CD4-positive, alpha-beta memory T cell (primary cell): ENCODE measurements at regions of chr7 and their contacts with region 1.

Region 1: GRCh38 chr7:70693686-70694360 is 438.1 kb upstream of the GALNT17 start:
- DNase-seq: peak; percentile 56 to 72 (median 70)
- H3K4me3 ChIP-seq: no peak overlapping the region
- H3K4me3 Mint-ChIP-seq: peak overlapping the region; percentile 74 to 90 (median 81)
- H3K27ac ChIP-seq: no peak overlapping the region
- H3K27ac Mint-ChIP-seq: peak overlapping the region; percentile 35 to 92 (median 84)
- H3K4me1 ChIP-seq: peaks cover 5% of the 10 kb centered on the region
- H3K4me1 Mint-ChIP-seq: peaks cover 8 to 40% (median 24%) of the 10 kb centered on the region in 4 donors
- H3K27me3 ChIP-seq: no peaks in the 10 kb centered on the region
- H3K27me3 Mint-ChIP-seq: peaks cover 12% of the 10 kb centered on the region in 2 donors

Region 2: DNA sequence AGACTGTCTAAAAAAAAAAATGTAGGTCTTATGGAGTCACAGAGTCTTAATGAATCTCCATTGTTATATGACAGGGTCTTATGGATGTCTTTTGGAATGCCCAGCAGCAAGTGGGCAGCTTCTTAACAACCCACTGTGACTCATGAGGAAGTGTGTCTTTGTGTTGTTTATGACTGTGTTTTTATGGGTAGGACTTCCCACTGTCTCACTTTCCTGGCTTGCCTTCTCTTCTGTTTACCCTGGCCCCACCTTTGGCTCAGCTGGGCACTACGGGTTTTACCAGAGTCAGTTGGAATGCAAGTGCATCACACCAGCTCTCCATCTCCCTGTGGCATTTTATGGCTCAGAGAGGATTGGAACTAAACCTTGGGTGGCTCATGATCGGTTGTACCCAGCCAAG is 515.0 kb before region 1 on chr7:
- CTCF ChIA-PET with region 1: no interaction called
- POLR2A ChIA-PET with region 1: interaction called, 3 read pairs
- intact Hi-C with region 1: loop called (anchors 5 kb)
- DNase-seq: no peak
- H3K4me3 ChIP-seq: no peak overlapping the region
- H3K4me3 Mint-ChIP-seq: no peak overlapping the region
- H3K27ac ChIP-seq: no peak overlapping the region
- H3K27ac Mint-ChIP-seq: no peak overlapping the region
- H3K4me1 ChIP-seq: peaks cover 6% of the 10 kb centered on the region
- H3K4me1 Mint-ChIP-seq: peaks cover 2 to 7% (median 6%) of the 10 kb centered on the region in 4 donors
- H3K27me3 ChIP-seq: no peaks in the 10 kb centered on the region
- H3K27me3 Mint-ChIP-seq: peaks cover 0 to 3% of the 10 kb centered on the region in 2 donors

Region 3: GRCh38 chr7:70316786-70317755 is 376.8 kb before region 1 on chr7:
- CTCF ChIA-PET with region 1: interaction called, 3 read pairs
- POLR2A ChIA-PET with region 1: interaction called, 5 read pairs
- intact Hi-C with region 1: loop called (anchors 5 kb)
- DNase-seq: peak; percentile 31 to 60 (median 59)
- H3K4me3 ChIP-seq: no peak overlapping the region
- H3K4me3 Mint-ChIP-seq: peak overlapping the region in 7 of 8 donors; percentile 38 to 75 (median 58)
- H3K27ac ChIP-seq: no peak overlapping the region
- H3K27ac Mint-ChIP-seq: peak overlapping the region; percentile 58 to 89 (median 76)
- H3K4me1 ChIP-seq: peaks cover 23% of the 10 kb centered on the region
- H3K4me1 Mint-ChIP-seq: peaks cover 13 to 49% (median 30%) of the 10 kb centered on the region in 4 donors
- H3K27me3 ChIP-seq: no peaks in the 10 kb centered on the region
- H3K27me3 Mint-ChIP-seq: no peaks in the 10 kb centered on the region

Region 4: DNA sequence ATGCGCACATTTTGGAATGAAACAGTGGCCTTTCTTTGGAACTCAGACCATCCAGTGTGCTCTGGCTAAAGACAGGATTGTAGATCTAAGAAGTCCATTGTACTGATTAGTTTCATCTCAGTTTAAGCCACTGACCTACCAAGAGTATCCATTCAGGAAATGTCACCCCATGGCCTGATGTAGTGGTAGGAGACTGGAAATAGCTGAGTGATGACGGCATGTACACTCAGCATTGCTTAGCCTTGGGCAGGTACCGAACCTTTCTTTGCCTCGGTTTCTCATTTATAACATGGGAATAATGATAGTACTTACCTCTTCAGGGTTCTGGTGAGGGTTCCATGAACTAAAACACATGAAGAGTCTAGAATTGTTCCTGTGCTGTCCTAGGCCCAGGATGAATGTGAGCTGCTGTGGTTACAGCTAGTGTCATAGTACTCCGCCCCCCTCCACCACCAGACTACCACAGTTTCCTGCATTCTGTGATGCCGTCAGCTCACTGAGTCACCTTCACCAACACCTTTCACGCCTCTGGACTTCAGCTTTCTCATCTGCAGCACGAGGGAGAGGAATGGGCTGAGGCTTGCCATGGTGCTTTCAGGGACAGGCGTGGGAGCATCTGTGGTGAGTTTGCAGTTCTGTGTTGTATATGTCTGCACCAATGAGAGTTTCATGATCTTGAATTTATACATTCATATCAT is 45.9 kb before region 1 on chr7:
- CTCF ChIA-PET with region 1: interaction called, 14 read pairs
- POLR2A ChIA-PET with region 1: interaction called, 51 read pairs
- intact Hi-C with region 1: loop called (anchors 1 kb)
- DNase-seq: peak; percentile 80 to 91 (median 87)
- H3K4me3 ChIP-seq: no peak overlapping the region
- H3K4me3 Mint-ChIP-seq: peak overlapping the region in 7 of 8 donors; percentile 29 to 79 (median 49)
- H3K27ac ChIP-seq: peak overlapping the region; percentile 28
- H3K27ac Mint-ChIP-seq: peak overlapping the region; percentile 78 to 96 (median 92)
- H3K4me1 ChIP-seq: peaks cover 20% of the 10 kb centered on the region
- H3K4me1 Mint-ChIP-seq: peaks cover 12 to 31% (median 15%) of the 10 kb centered on the region in 4 donors
- H3K27me3 ChIP-seq: no peaks in the 10 kb centered on the region
- H3K27me3 Mint-ChIP-seq: no peaks in the 10 kb centered on the region

Region 5: DNA sequence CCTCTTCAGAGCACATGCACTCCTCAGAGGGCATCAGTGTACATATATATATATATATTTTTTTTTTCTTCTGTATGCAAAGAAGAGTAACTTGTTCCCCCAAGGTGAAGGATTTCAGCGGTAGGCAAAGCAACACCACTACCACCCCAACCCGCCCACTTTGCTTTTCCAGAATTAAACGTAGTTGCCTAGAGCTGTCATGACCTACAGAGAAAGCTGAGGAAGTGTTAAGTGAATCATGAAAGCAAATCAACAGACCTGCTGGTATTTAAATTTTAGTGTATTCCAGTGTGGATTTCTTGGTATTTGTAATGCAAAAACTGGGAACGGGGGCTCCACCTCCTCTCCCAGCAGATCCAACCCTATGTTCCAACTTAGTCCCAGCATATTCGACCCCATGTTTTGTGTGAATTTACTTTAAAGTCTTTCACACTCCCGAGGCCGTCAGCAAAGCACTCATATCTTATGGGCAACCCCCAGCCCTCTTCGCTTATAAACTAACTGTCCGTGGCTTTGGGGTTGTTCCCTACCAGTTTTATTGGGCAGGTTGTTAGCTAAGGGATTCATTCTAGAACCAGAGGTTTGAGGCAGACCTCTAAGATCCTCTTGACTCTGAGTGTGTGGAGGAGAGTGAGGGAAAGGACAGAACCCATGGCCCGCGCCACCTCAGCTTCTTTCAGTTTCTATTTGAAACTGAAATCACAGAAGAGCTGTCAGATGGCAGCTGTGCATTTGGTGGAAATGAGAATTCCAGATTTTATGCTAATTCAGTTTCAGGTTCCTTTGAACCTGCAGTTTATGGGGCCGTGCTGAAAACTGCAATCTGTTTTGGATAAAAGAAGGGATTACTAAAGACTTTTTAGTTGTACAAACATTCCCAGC is 12.1 kb before region 1 on chr7:
- CTCF ChIA-PET with region 1: interaction called, 13 read pairs
- POLR2A ChIA-PET with region 1: interaction called, 14 read pairs
- intact Hi-C with region 1: no loop called
- DNase-seq: peak in 2 of 5 donors; percentile 30 to 46
- H3K4me3 ChIP-seq: peak overlapping the region in 1 of 2 donors; percentile 2
- H3K4me3 Mint-ChIP-seq: peak overlapping the region; percentile 83 to 90 (median 86)
- H3K27ac ChIP-seq: peak overlapping the region; percentile 50
- H3K27ac Mint-ChIP-seq: peak overlapping the region; percentile 75 to 98 (median 95)
- H3K4me1 ChIP-seq: peaks cover 16% of the 10 kb centered on the region
- H3K4me1 Mint-ChIP-seq: peaks cover 19 to 46% (median 33%) of the 10 kb centered on the region in 4 donors
- H3K27me3 ChIP-seq: no peaks in the 10 kb centered on the region
- H3K27me3 Mint-ChIP-seq: peaks cover 0 to 1% of the 10 kb centered on the region in 2 donors

Region 6: DNA sequence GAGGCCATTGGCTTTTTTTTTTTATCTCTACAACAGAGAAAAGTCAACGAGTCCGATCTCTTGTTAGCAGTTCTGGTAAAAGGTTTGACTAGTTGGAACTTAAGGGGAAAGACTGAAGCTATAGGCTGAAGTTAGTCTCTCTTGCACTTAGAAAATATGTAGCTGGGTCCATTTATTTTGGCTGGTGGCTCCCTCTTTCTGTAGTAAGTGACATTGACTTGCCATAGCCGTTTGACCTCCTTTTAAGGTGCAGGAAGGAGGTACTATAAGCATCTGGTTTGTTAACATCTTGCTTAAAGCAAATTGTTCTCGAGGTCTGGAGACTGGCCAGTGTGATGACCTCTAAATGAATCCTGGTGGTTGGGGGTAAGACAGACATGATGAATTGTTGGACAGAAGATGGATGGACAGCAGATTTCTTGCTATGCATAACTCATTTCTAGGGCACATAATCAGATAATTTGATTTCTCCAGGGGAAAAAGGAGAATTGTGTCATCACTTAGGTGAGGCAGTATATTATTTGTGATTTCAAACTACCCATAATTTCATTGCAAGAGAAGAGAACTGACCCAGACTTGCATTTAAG is 81.8 kb after region 1 on chr7:
- CTCF ChIA-PET with region 1: interaction called, 21 read pairs
- POLR2A ChIA-PET with region 1: interaction called, 22 read pairs
- intact Hi-C with region 1: no loop called
- DNase-seq: peak in 2 of 5 donors; percentile 34 to 51
- H3K4me3 ChIP-seq: no peak overlapping the region
- H3K4me3 Mint-ChIP-seq: peak overlapping the region in 5 of 8 donors; percentile 5 to 71 (median 64)
- H3K27ac ChIP-seq: peak overlapping the region; percentile 38
- H3K27ac Mint-ChIP-seq: peak overlapping the region; percentile 43 to 98 (median 92)
- H3K4me1 ChIP-seq: peaks cover 46% of the 10 kb centered on the region
- H3K4me1 Mint-ChIP-seq: peaks cover 34 to 71% (median 44%) of the 10 kb centered on the region in 4 donors
- H3K27me3 ChIP-seq: no peaks in the 10 kb centered on the region
- H3K27me3 Mint-ChIP-seq: no peaks in the 10 kb centered on the region

Region 7: DNA sequence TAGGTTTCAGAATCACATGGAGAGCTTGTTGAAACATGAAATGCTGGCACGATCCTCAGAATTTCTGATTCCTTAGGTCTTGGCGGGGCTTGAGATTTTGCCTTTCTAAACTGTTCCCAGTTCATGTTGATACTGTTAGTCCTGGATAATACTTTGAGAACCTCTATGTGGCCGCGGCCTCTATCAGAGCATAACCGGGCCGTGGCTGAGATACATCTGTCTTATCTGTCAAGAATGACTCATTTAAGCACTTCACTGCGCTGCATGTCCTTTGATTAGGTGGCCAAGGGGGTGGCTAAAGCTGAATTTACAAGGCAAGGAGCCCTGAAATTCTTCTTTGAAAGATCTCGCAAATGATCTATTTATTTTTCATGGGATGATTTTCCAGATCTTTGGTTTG is 505.1 kb after region 1 on chr7:
- CTCF ChIA-PET with region 1: no interaction called
- POLR2A ChIA-PET with region 1: no interaction called
- intact Hi-C with region 1: no loop called
- DNase-seq: no peak
- H3K4me3 ChIP-seq: no peak overlapping the region
- H3K4me3 Mint-ChIP-seq: no peak overlapping the region
- H3K27ac ChIP-seq: no peak overlapping the region
- H3K27ac Mint-ChIP-seq: no peak overlapping the region
- H3K4me1 ChIP-seq: no peaks in the 10 kb centered on the region
- H3K4me1 Mint-ChIP-seq: no peaks in the 10 kb centered on the region
- H3K27me3 ChIP-seq: no peaks in the 10 kb centered on the region
- H3K27me3 Mint-ChIP-seq: no peaks in the 10 kb centered on the region

Region 8: GRCh38 chr7:71348821-71349681 is 655.2 kb after region 1 on chr7:
- CTCF ChIA-PET with region 1: no interaction called
- POLR2A ChIA-PET with region 1: no interaction called
- intact Hi-C with region 1: no loop called
- DNase-seq: no peak
- H3K4me3 ChIP-seq: no peak overlapping the region
- H3K4me3 Mint-ChIP-seq: no peak overlapping the region
- H3K27ac ChIP-seq: no peak overlapping the region
- H3K27ac Mint-ChIP-seq: no peak overlapping the region
- H3K4me1 ChIP-seq: no peaks in the 10 kb centered on the region
- H3K4me1 Mint-ChIP-seq: no peaks in the 10 kb centered on the region
- H3K27me3 ChIP-seq: no peaks in the 10 kb centered on the region
- H3K27me3 Mint-ChIP-seq: no peaks in the 10 kb centered on the region